Activated CD4-positive, alpha-beta memory T cell treated with anti-CD3 and anti-CD28 coated beads, Interleukin-2, amount 10 ng/mL, durations not matched to agents 7 days and 5 days (primary cell): ENCODE measurements at regions of chr1 and their contacts with region 1.

Region 1: GRCh38 chr1:151828965-151829698 is 2.5 kb downstream of the RORC start:
- DNase-seq: no peak
- H3K4me3 Mint-ChIP-seq: peak overlapping the region; percentile 65
- H3K27ac Mint-ChIP-seq: peak overlapping the region; percentile 97
- H3K4me1 Mint-ChIP-seq: peaks cover 90% of the 10 kb centered on the region
- H3K27me3 Mint-ChIP-seq: no peaks in the 10 kb centered on the region

Region 2: GRCh38 chr1:151594143-151594625 is 234.9 kb before region 1 on chr1:
- CTCF ChIA-PET with region 1: interaction called, 12 read pairs
- POLR2A ChIA-PET with region 1: interaction called, 4 read pairs
- DNase-seq: peak; percentile 87
- H3K4me3 Mint-ChIP-seq: no peak overlapping the region
- H3K27ac Mint-ChIP-seq: peak overlapping the region; percentile 16
- H3K4me1 Mint-ChIP-seq: peaks cover 9% of the 10 kb centered on the region
- H3K27me3 Mint-ChIP-seq: peaks cover 20% of the 10 kb centered on the region

Region 3: GRCh38 chr1:151710187-151710840 is 118.8 kb before region 1 on chr1:
- CTCF ChIA-PET with region 1: no interaction called
- POLR2A ChIA-PET with region 1: no interaction called
- DNase-seq: peak; percentile 33
- H3K4me3 Mint-ChIP-seq: no peak overlapping the region
- H3K27ac Mint-ChIP-seq: no peak overlapping the region
- H3K4me1 Mint-ChIP-seq: peaks cover 6% of the 10 kb centered on the region
- H3K27me3 Mint-ChIP-seq: peaks cover 9% of the 10 kb centered on the region

Region 4: DNA sequence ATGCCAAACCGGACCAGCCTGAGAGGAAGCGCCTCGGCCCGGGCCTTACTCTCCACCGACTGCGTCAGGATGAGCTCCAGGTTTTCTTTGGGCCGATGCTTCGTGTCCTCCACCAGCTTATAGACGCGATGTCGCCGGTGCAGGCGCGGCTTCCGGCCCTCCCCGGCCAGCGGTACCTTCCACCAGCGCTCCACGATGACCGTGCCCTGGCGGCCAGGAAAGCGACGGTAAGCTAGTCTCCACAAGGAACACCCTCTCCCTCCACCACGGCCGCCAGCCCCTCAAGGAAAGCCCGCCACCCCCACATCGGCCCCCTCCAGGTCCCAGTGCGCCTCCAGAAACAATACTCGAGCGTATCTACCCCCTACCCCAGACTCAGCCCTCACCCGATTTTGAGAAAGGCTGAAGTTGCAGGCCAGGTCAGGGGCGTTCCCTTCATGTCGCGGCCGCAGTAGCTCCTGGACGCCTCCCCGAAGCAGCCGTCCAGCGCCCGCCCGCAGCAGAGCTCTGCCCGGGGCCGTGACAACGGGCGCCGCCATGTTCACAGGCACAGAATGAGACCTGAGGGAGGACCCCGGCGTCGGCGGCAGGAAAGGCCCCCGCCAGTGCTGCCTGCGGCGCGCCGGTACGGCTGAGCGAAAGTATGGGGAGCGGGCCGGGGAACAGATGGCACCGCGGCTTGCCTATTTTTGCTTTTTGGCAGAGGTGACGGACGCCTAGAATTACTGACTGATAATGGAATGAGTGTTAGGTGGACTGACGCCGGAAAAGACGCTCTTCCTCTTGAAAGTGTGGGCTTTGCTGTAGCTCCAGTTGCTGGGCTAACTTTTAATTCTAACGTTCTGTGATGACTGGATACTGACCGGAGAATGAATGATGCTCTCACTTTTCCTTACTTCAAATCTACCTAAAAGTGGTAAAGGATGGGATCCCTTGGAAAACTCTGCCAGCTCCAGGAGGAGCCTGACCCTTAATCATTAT is 65.9 kb before region 1 on chr1 and contains the start of gene MRPL9:
- CTCF ChIA-PET with region 1: interaction called, 4 read pairs
- POLR2A ChIA-PET with region 1: interaction called, 12 read pairs
- DNase-seq: peak; percentile 89
- H3K4me3 Mint-ChIP-seq: peak within 1 kb of the TSS; percentile 77
- H3K27ac Mint-ChIP-seq: peak within 1 kb of the TSS; percentile 79
- H3K4me1 Mint-ChIP-seq: peaks cover 43% of the 10 kb centered on the region
- H3K27me3 Mint-ChIP-seq: no peaks in the 10 kb centered on the region
- total RNA-seq, gene MRPL9: 97.9 to 98.9 TPM

Region 5: DNA sequence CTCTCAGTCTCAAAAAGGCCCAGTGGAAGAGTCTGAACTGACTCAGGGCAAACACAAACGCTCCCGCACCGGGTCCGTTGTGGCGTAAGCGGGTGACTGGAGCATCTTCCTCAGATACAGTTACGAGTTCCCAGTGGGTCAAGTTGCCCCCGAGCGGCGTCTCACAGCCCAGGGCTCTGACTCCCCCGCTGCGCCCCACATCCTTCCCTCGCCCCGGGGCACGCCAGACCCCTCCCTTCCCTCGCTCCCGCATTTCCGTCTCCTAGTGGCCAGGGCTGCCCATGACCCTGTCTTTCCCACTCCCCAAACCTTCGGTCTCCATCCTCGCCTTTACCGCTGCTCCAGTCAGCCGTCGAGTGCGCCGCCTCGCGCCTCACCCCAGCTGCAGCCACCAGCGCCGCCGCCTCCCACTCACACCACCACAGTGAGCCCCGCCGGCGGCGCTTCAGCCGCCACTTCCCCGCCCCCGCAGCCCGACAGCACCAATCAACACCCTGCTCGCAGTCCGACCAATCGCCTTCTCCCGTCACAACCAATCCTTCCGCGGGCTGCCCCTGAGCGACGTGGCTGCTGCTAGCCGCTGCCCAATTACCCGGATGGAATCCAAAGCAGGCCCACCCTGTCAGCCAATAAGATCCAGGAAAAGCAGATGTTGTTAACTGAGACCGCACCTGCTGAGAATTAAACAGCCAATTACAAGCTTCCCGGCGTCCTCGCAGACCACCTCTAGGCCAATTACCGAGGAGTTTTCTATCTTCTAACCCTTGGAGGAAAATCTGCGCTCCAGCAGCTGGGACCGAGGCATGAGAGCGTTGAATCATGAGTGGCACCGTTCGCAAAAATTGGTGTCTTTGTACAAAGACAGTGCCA is 38.8 kb before region 1 on chr1 and contains the start of gene TDRKH:
- CTCF ChIA-PET with region 1: interaction called, 8 read pairs
- POLR2A ChIA-PET with region 1: interaction called, 30 read pairs
- DNase-seq: peak; percentile 99
- H3K4me3 Mint-ChIP-seq: peak within 1 kb of the TSS; percentile 88
- H3K27ac Mint-ChIP-seq: peak within 1 kb of the TSS; percentile 66
- H3K4me1 Mint-ChIP-seq: peaks cover 28% of the 10 kb centered on the region
- H3K27me3 Mint-ChIP-seq: no peaks in the 10 kb centered on the region
- total RNA-seq, gene TDRKH: 27.1 to 30.9 TPM

Region 6: DNA sequence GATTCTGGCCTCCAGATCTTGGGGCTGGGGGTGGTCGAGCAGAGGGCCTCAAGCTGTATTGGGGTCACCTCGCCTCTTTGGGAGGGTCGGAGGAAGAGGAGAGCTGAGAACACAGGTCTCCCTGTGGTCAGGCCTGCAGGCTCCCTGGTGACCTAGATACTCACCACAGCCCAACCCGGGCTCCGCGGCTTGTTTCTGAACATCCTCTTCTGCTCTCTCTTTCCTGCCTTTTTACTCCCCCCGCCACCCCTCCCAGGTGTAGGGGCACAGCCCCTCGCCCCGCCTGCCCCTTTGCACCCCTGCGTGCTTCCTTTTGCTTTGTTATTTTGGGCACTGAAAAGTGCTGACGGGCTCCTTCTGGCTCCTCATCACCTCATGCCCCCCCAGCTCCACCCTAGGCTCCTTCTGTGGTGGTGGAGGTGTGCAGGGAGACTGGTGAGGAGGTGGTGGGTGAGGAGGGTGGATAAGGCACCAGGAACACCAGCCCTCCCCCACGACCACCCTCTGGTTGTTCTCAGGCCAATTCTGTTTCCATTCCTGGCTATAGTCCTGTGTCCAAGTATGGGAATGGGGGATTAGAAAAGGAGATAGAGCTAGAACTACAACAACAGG is 13.3 kb before region 1 on chr1:
- CTCF ChIA-PET with region 1: interaction called, 11 read pairs
- POLR2A ChIA-PET with region 1: interaction called, 48 read pairs
- DNase-seq: peak; percentile 77
- H3K4me3 Mint-ChIP-seq: peak overlapping the region; percentile 22
- H3K27ac Mint-ChIP-seq: peak overlapping the region; percentile 80
- H3K4me1 Mint-ChIP-seq: peaks cover 85% of the 10 kb centered on the region
- H3K27me3 Mint-ChIP-seq: no peaks in the 10 kb centered on the region